Posterior vena cava (tissue), 2 donors: ENCODE measurements at regions of chr11 and their contacts with region 1.

Region 1: GRCh38 chr11:101487775-101488174 is 96.0 kb downstream of the TRPC6 start:
- DNase-seq: no peak

Region 2: DNA sequence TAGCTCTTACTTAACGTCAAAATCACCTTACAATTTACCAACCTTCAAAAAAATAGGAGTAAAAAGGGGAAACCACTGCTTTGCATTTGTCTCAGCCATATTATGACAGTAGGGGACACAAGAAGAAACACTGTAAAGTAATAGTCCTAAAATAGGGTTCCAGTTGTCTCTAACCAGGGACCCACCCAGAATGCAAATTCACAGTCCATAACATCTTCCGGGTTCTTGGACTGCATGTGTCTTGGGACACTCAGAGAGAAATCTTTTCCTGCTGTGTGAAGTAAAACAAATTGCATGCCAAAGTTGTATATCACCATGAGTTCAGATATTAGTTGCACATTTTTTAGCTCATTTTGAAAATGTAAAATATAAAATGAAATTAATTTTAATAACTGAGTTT is 288.4 kb before region 1 on chr11:
- intact Hi-C with region 1: loop called in 1 of 2 experiments (anchors 10 kb)
- DNase-seq: no peak